ENCODE measurements at regions of chr7 and their contacts with region 1.

Region 1: DNA sequence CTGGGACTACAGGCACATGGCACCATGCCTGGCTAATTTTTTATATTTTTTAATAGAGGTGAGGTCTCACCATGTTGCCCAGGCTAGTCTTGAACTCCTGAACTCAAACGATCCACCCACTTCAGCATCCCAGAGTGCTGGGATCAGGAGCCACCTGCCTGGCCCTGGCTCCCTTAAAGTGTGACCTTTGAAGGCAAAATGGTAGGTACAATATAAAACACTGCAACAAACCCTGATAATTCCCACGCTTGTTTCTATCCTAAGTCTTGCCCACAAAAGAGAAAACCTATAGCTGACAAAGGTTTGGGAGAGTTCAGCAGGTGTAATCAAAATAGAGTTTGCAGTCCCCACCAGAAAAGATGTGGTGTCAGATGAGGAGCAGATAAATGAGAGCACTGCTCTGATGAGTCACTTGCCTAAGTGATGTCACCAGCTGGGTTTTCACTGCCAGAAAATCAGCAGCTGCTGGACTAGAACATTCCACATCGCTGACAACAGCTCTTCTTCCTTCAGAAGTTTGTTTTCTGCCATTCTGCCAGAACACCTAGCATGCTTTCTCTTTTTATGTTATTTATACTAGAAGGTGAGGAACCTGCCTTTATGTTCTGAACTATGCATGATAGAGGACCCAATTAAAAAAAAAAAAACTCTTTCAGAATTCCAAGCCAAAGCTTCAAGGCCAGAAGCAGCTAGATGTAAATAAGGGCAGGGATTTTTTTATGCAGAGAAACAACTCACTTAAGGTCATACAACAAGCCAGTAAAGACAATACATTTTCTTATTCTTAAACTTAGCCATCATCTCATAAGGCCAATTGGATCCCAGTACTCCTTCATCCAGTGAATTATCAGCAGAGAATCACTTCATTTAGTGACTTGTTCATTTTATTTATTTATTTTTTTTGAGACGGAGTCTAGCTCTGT is 18.0 kb downstream of the PURB start:
- DNase-seq: peak; percentile 64
- H3K4me3 ChIP-seq: no peak overlapping the region
- H3K27ac ChIP-seq: no peak overlapping the region
- H3K27me3 ChIP-seq: no peaks in the 10 kb centered on the region
- CTCF ChIP-seq: no peak

Region 2: GRCh38 chr7:44712012-44712411 is 155.3 kb before region 1 on chr7:
- CTCF ChIA-PET with region 1: no interaction called
- POLR2A ChIA-PET with region 1: no interaction called
- DNase-seq: no peak
- H3K4me3 ChIP-seq: no peak overlapping the region
- H3K27ac ChIP-seq: no peak overlapping the region
- H3K27me3 ChIP-seq: no peaks in the 10 kb centered on the region
- CTCF ChIP-seq: no peak

Region 3: GRCh38 chr7:44880317-44881018 is 13.1 kb after region 1 on chr7:
- CTCF ChIA-PET with region 1: interaction called, 4 read pairs
- POLR2A ChIA-PET with region 1: interaction called, 17 read pairs
- DNase-seq: no peak
- H3K4me3 ChIP-seq: peak overlapping the region; percentile 79
- H3K27ac ChIP-seq: no peak overlapping the region
- H3K27me3 ChIP-seq: no peaks in the 10 kb centered on the region
- CTCF ChIP-seq: no peak

Region 4: DNA sequence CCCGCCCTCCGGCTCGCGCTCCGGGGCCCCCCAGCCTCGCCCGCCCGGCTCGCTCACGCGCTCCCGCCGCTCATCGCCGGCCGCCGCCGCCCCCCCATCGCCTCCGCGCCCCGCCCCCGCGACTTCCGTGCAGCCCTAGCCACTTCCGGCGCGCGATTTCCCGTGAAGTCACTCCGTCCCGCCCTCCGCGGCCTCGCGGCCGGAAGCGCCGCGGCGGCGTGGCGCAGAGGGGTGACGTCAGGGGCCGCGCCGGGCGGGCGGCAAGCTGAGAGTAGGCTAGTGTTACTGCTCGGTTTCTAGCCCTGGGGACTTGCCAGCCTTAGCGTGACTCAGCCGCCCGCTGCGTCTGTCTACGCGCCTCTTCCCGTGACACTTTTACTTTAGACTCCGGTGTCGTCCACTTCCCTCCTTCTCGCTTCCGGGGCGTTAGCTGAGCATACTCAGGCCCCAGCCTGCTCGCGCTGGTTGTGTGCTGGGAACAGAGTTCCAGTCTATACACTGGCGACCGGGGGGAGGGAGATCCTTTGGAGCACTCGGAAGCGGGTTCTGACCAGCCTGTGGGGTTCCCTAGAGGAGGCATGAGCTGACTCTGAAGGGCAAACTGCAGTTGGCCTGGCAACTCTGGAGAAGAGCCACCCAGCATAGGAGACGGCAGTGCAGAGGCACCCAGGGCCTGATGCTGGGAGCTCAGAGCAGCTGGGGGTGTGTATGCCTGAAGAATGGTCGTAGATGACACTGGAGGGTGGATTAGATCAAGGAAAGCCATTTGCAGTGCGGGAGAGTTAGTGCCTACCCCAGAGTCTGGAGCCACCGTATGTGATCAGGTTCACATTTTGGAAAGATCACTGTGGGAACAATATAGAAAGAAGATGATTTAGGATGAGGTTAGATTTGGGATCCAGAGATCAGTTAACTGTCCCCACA is 18.3 kb after region 1 on chr7 and contains the start of gene PURB:
- CTCF ChIA-PET with region 1: interaction called, 3 read pairs
- POLR2A ChIA-PET with region 1: interaction called, 17 read pairs
- DNase-seq: peak; percentile 92
- H3K4me3 ChIP-seq: peak within 1 kb of the TSS; percentile 94
- H3K27ac ChIP-seq: peak within 1 kb of the TSS; percentile 99
- H3K27me3 ChIP-seq: no peaks in the 10 kb centered on the region
- CTCF ChIP-seq: no peak
- polyA plus RNA-seq, gene PURB: 7.6 TPM in 2 replicates

Region 5: DNA sequence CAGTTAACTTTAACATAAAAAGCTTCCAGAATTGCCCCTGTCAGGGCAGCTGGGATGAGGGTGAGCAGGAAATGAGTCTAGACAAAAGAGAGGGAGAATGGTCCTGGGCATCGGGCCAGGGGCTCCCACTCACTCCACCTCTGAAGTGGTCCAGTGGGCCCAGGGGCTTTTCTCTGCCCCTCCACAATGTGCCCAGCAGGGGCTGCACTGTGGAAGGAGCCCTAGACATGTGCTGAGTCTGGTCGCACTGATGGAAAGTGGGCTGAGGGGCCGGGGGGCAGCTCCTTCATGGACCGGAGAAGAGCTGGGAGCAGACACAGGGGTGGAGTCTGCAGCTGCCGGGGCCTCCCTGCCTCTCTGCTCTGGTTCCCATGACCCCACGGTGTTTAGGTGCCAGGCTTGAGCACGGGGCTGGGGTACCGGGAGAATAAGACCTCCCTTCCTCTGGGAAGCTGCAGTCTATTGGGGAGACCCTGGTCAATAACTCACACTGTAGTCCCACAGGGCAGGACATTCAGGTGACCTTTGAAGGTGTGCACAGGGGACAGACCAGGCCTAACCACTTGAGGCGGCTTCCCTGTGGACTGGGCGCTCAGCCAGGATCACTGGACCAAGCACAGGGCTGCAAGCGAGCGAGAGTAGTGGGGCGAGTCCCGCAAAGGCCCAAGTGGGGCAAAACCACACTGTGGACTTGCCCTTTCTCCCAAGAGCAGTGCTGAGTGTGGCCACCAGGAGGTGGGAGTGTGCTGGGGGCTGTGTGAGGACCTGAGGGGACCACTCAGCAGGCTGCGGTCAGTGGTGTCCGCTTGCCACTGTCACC is 712.9 kb after region 1 on chr7:
- CTCF ChIA-PET with region 1: no interaction called
- POLR2A ChIA-PET with region 1: no interaction called
- DNase-seq: no peak
- H3K4me3 ChIP-seq: no peak overlapping the region
- H3K27ac ChIP-seq: no peak overlapping the region
- H3K27me3 ChIP-seq: peaks cover 35% of the 10 kb centered on the region
- CTCF ChIP-seq: peak; percentile 32; the same call in 1 of the 2 replicates

Measured in AG04450 (cell line).